Aorta (tissue), 5 donors: ENCODE measurements at regions of chr19 and their contacts with region 1.

Region 1: DNA sequence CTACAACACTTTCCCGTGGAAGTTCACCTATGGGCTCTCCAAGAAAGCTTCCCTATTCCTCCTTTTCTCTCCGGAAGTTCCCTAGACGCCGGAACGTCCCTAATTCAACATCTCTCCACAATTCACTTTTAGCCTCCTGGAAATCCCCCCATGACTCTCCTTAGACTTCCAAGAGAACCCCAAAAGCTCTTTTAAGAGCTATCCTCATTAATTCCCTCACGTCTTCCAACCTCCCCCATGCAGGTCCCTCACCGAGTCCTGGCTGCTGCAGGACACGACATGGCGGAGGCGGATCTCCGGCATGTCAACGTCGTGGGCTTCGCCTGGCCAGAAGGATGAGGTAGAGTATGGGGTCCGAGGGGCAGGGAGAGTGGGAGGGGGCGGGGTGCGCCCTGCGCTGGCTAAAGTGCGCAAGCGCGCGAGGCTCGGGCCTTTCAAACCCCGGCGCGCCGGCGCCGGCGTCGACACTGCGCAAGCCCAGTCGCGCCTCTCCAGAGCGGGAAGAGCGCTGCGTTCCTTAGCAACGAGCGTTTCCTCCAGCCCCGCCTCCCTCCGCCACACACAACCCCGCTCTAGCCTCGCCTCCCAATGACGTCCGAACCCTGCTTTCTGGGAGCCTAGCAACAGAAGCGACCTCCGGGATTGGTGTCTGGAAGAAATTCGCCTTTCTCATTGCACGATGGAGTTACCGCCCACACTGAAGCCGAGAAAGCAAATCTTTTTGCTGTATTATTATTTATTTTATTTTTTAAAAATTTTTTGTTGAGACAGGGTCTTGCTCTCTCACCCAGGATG is at the starts of genes PINLYP and XRCC1:
- DNase-seq: peak; percentile 99
- ATAC-seq: peak; percentile 99
- H3K4me3 ChIP-seq: peak within 1 kb of the TSS; percentile 62 to 86
- H3K27ac ChIP-seq: peak within 1 kb of the TSS in 1 of 2 donors; percentile 68
- H3K4me1 ChIP-seq: no peaks in the 10 kb centered on the region
- H3K27me3 ChIP-seq: no peaks in the 10 kb centered on the region
- total RNA-seq, gene PINLYP: 8.2 to 10.1 TPM
- total RNA-seq, gene XRCC1: 22.3 to 30.2 TPM

Region 2: DNA sequence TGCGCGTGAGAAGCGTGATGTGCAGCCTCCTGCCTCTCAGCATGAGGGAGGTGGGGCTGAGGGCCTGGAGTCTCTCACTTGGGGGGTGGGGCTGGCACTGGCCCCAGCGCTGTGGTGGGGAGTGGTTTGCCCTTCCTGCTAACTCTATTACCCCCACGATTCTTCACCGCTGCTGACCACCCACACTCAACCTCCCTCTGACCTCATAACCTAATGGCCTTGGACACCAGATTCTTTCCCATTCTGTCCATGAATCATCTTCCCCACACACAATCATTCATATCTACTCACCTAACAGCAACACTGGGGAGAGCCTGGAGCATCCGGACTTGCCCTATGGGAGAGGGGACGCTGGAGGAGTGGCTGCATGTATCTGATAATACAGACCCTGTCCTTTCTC is 213.2 kb before region 1 on chr19:
- intact Hi-C with region 1: no loop called
- DNase-seq: no peak
- ATAC-seq: no peak
- H3K4me3 ChIP-seq: no peak overlapping the region
- H3K27ac ChIP-seq: no peak overlapping the region
- H3K4me1 ChIP-seq: no peaks in the 10 kb centered on the region
- H3K27me3 ChIP-seq: no peaks in the 10 kb centered on the region

Region 3: GRCh38 chr19:43595999-43596841 is 20.9 kb after region 1 on chr19 and contains the starts of genes IRGQ and ZNF576:
- intact Hi-C with region 1: loop called (anchors 1 kb)
- DNase-seq: peak; percentile 100
- ATAC-seq: peak; percentile 97
- H3K4me3 ChIP-seq: peak within 1 kb of the TSS; percentile 45 to 74
- H3K27ac ChIP-seq: peak within 1 kb of the TSS; percentile 15 to 61
- H3K4me1 ChIP-seq: peaks cover 0 to 5% of the 10 kb centered on the region in 2 donors
- H3K27me3 ChIP-seq: no peaks in the 10 kb centered on the region
- total RNA-seq, gene IRGQ: 20.3 to 25.5 TPM
- total RNA-seq, gene ZNF576: 12.0 to 14.5 TPM